Right cardiac atrium (tissue), 5 donors: ENCODE measurements at regions of chr3 and their contacts with region 1.

Region 1: GRCh38 chr3:129087138-129087702 is 26.6 kb downstream of the GP9 start:
- DNase-seq: peak; percentile 51 to 81 (median 74)
- ATAC-seq: peak; percentile 61 to 80
- H3K4me3 ChIP-seq: no peak overlapping the region
- H3K27ac ChIP-seq: peak overlapping the region; percentile 28
- H3K4me1 ChIP-seq: peaks cover 3% of the 10 kb centered on the region
- H3K27me3 ChIP-seq: no peaks in the 10 kb centered on the region

Region 2: GRCh38 chr3:128950223-128950938 is 136.8 kb before region 1 on chr3:
- intact Hi-C with region 1: no loop called
- DNase-seq: no peak
- ATAC-seq: peak in 1 of 2 donors; percentile 60
- H3K4me3 ChIP-seq: no peak overlapping the region
- H3K27ac ChIP-seq: no peak overlapping the region
- H3K4me1 ChIP-seq: no peaks in the 10 kb centered on the region
- H3K27me3 ChIP-seq: no peaks in the 10 kb centered on the region

Region 3: GRCh38 chr3:128969993-128970739 is 117.1 kb before region 1 on chr3:
- intact Hi-C with region 1: loop called in 1 of 4 experiments (anchors 10 kb)
- DNase-seq: peak in 2 of 3 donors; percentile 67 to 70
- ATAC-seq: peak in 1 of 2 donors; percentile 41
- H3K4me3 ChIP-seq: no peak overlapping the region
- H3K27ac ChIP-seq: no peak overlapping the region
- H3K4me1 ChIP-seq: no peaks in the 10 kb centered on the region
- H3K27me3 ChIP-seq: no peaks in the 10 kb centered on the region

Region 4: DNA sequence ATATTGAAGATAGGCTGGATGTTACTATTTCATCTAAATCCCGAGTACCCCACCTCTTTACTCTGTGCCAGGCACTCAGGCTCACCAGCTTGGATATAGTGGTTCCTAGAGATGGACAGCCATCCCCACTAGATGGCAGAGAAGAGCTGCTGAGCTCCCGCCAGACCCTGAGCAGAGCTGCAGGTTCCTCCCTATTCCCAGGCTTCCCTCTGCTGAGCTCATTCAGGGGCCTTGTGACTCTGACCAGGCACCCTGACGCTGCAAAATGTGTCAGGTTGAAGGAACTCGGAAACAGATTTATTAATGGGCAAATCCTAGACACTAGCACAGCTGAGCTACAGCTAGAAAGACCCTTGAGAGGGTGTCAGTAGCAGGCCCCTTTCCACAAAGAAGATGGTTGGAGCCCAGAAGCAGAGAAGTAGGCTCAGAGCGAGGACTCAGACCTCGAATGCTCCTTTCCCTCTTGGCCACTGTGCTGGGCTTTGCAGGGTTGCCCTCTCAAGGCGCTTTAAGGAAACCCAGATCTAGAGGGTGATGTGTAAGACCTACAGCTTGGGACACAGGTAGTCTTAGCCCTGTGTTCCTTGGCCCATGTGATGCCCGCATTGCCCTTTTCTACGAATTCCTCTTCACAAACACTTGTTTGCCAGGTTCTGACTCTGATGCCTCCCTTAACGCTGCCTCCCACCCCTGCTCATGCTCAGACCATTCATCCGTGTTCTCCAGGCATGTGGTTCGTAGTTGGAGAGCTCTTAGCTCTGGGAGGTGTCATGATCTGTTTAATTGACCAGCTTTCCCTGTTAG is 403.2 kb after region 1 on chr3:
- intact Hi-C with region 1: no loop called
- DNase-seq: peak; percentile 84 to 92 (median 92)
- ATAC-seq: peak; percentile 88 to 91
- H3K4me3 ChIP-seq: no peak overlapping the region
- H3K27ac ChIP-seq: peak overlapping the region; percentile 84
- H3K4me1 ChIP-seq: peaks cover 9% of the 10 kb centered on the region
- H3K27me3 ChIP-seq: no peaks in the 10 kb centered on the region